ENCODE measurements at regions of chr4 and their contacts with region 1.

Region 1: GRCh38 chr4:2186133-2186864 is 55.6 kb downstream of the HAUS3 start:
- DNase-seq: no peak
- H3K4me3 Mint-ChIP-seq: no peak overlapping the region
- H3K27ac Mint-ChIP-seq: no peak overlapping the region
- H3K4me1 Mint-ChIP-seq: no peaks in the 10 kb centered on the region
- H3K27me3 Mint-ChIP-seq: no peaks in the 10 kb centered on the region

Region 2: GRCh38 chr4:742742-743311 is 1443.5 kb before region 1 on chr4:
- CTCF ChIA-PET with region 1: no interaction called
- intact Hi-C with region 1: no loop called
- DNase-seq: peak; percentile 85
- H3K4me3 Mint-ChIP-seq: no peak overlapping the region
- H3K27ac Mint-ChIP-seq: no peak overlapping the region
- H3K4me1 Mint-ChIP-seq: peaks cover 1% of the 10 kb centered on the region
- H3K27me3 Mint-ChIP-seq: no peaks in the 10 kb centered on the region

Region 3: DNA sequence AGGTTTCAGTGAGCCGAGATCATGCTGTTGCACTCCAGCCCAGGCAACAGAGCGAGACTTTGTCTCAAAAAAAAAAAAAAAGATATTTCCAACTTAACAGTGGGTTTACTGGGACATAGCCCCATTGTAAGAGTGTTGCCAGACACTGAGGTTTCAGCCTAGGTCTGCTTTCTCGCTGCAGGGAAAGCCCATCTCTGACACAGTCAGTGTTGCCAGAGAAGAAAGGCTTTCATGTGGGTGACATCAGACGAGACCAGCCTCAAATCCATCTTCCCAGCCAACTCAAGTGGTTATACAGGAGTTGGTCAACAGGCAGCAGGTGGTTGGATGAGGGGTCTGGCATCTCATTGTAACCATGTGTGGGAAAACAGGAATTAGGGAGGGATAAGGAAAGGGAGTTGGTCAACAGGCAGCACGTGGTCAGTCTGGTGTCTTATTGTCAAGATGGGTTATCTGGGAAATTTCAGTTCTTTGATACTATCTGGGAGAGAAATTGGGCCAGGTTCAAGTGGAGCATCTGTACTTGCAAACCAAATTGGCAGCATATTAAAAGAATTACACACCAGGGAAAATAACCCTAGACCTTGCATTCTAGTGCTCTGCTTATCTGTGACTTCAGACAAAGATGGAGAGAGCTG is 218.7 kb before region 1 on chr4:
- CTCF ChIA-PET with region 1: no interaction called
- intact Hi-C with region 1: loop called (anchors 5 kb)
- DNase-seq: no peak
- H3K4me3 Mint-ChIP-seq: no peak overlapping the region
- H3K27ac Mint-ChIP-seq: peak overlapping the region; percentile 14
- H3K4me1 Mint-ChIP-seq: peaks cover 2% of the 10 kb centered on the region
- H3K27me3 Mint-ChIP-seq: no peaks in the 10 kb centered on the region

Region 4: GRCh38 chr4:2305766-2306501 is 119.6 kb after region 1 on chr4:
- CTCF ChIA-PET with region 1: no interaction called
- intact Hi-C with region 1: no loop called
- DNase-seq: no peak
- H3K4me3 Mint-ChIP-seq: no peak overlapping the region
- H3K27ac Mint-ChIP-seq: no peak overlapping the region
- H3K4me1 Mint-ChIP-seq: no peaks in the 10 kb centered on the region
- H3K27me3 Mint-ChIP-seq: no peaks in the 10 kb centered on the region

Region 5: DNA sequence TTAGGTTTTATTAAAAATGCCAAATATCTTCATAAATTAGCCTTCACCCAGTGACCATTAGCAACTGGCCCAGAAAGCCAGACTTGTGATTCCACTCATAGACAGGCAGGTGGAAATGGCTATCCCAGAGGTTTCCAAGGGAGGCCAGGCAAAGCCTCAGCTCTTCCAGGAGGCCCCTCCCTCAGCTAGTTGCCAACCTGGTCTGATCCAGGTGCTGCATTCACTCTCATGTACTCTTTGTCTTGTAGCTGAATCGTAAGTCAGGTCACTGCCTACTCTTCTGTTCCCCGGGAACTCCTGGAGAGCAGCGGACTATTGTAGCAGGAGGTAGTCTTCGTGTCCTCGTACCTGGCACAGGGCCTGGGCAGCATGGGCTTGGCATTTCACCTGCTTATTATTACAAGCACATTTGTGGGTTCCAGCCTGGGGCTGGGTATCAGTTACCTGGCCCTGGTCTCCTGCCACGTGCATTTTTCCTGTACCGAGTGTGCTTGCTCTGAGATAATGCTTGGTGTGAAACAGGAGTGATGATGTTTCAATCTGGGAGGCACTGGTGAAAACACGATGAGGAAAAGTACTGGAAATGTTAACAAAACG is 451.8 kb after region 1 on chr4:
- CTCF ChIA-PET with region 1: no interaction called
- intact Hi-C with region 1: no loop called
- DNase-seq: no peak
- H3K4me3 Mint-ChIP-seq: no peak overlapping the region
- H3K27ac Mint-ChIP-seq: no peak overlapping the region
- H3K4me1 Mint-ChIP-seq: no peaks in the 10 kb centered on the region
- H3K27me3 Mint-ChIP-seq: no peaks in the 10 kb centered on the region

Measured in activated naive CD4-positive, alpha-beta T cell treated with anti-CD3 and anti-CD28 coated beads for 36 hours (primary cell).